ENCODE measurements at regions of chr5 and their contacts with region 1.

Region 1: DNA sequence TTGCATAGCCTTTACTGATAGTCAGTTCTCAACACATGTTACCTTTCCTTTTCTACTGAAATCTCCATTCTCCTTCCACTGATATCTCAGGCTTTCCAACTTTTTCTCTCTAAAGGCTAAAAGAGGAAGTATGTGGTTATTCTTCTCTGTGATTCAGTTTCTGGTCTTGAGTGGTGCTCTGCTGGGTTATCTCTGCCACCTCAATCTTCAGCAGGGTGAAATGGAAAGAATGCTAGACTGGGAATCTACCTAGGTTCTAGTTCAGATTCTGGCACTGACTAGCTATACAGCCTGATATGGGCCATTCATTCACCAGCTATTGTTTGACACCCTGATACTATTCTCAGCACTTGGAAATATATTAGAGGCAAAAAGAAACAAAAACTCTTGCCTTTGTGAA is 124.9 kb upstream of the GRIA1 start:
- DNase-seq: no peak
- H3K4me3 ChIP-seq: no peak overlapping the region
- H3K27ac ChIP-seq: no peak overlapping the region
- H3K4me1 ChIP-seq: no peaks in the 10 kb centered on the region
- H3K27me3 ChIP-seq: no peaks in the 10 kb centered on the region
- CTCF ChIP-seq: no peak

Region 2: GRCh38 chr5:151805414-151806223 is 1559.9 kb before region 1 on chr5:
- intact Hi-C with region 1: loop called (anchors 10 kb)
- DNase-seq: no peak
- H3K4me3 ChIP-seq: no peak overlapping the region
- H3K27ac ChIP-seq: no peak overlapping the region
- H3K4me1 ChIP-seq: peaks cover 0 to 8% of the 10 kb centered on the region in 2 donors
- H3K27me3 ChIP-seq: no peaks in the 10 kb centered on the region
- CTCF ChIP-seq: no peak

Region 3: DNA sequence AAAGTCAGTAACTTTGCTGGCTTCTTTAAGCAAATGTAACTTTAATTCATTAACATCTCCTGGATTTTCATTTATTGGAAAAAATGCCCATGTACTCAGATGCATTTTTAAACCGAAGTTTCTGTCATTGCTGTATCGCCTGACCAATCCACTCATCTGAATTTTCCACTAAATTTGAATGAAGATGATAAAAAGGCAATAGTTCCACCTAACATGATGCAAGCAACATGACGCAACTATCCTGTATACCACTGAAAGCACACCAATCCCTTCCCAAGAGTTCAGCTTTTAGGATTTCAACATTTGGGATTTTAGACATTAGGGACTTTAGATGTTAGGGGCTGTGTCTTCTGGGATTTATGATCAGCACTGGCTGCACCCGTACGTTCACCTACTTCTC is 1863.6 kb after region 1 on chr5:
- intact Hi-C with region 1: no loop called
- DNase-seq: no peak
- H3K4me3 ChIP-seq: no peak overlapping the region
- H3K27ac ChIP-seq: no peak overlapping the region
- H3K4me1 ChIP-seq: no peaks in the 10 kb centered on the region
- H3K27me3 ChIP-seq: no peaks in the 10 kb centered on the region
- CTCF ChIP-seq: no peak